Cardiac septum (tissue), 1 donor: ENCODE measurements at regions of chrX and their contacts with region 1.

Region 1: GRCh38 chrX:111445486-111445885 is 33.5 kb upstream of the DCX start:
- DNase-seq: no peak

Region 2: GRCh38 chrX:111168314-111168713 is 277.2 kb before region 1 on chrX:
- intact Hi-C with region 1: loop called (anchors 5 kb)
- DNase-seq: no peak

Region 3: GRCh38 chrX:111262096-111262495 is 183.4 kb before region 1 on chrX:
- intact Hi-C with region 1: loop called (anchors 10 kb)
- DNase-seq: no peak

Region 4: GRCh38 chrX:111360839-111361238 is 84.6 kb before region 1 on chrX:
- intact Hi-C with region 1: loop called (anchors 10 kb)
- DNase-seq: no peak

Region 5: DNA sequence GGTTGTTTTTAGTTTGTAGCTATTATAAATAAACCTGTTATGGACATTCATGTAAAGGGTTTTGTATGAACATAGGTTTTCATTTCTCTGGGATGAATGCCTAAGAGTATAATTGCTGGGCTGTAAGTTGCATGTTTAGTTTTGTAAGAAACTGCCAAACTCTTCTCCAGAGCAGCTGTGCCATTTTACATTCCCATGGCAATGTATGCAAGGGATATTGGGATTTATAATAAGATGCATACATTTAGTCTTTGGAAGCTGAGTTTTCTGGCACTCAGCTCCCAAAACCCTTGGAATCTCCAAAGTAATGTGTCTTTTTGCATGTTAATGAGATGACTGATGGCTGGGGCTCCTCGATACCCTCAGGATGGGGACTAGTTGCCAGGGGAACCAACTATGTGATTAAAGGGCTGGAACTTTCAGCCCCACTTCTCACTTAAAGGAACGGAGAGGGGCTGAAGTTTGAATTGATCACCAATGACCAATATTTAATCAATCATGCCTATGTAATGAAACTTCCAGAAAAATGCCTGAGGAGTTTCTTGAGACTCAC is 110.0 kb after region 1 on chrX:
- intact Hi-C with region 1: no loop called
- DNase-seq: no peak